ENCODE measurements at regions of chr4 and their contacts with region 1.

Region 1: GRCh38 chr4:791871-792625 is 33.9 kb downstream of the CPLX1 start:
- DNase-seq: peak; percentile 69
- ATAC-seq: peak; percentile 57
- H3K4me3 Mint-ChIP-seq: no peak overlapping the region
- H3K27ac Mint-ChIP-seq: no peak overlapping the region
- H3K4me1 Mint-ChIP-seq: peaks cover 26% of the 10 kb centered on the region
- H3K27me3 Mint-ChIP-seq: peaks cover 71% of the 10 kb centered on the region
- CTCF ChIP-seq: no peak

Region 2: GRCh38 chr4:781493-782216 is 10.4 kb before region 1 on chr4:
- CTCF ChIA-PET with region 1: interaction called, 19 read pairs
- POLR2A ChIA-PET with region 1: interaction called, 14 read pairs
- DNase-seq: peak; percentile 99
- ATAC-seq: peak; percentile 92
- H3K4me3 Mint-ChIP-seq: peak overlapping the region; percentile 77
- H3K27ac Mint-ChIP-seq: no peak overlapping the region
- H3K4me1 Mint-ChIP-seq: peaks cover 36% of the 10 kb centered on the region
- H3K27me3 Mint-ChIP-seq: peaks cover 39% of the 10 kb centered on the region
- CTCF ChIP-seq: no peak

Measured in WTC11 (cell line).